RWPE1 (cell line): ENCODE measurements at regions of chr11 and their contacts with region 1.

Region 1: GRCh38 chr11:11621573-11622319 is at the start of gene GALNT18:
- DNase-seq: peak; percentile 98
- H3K27ac ChIP-seq: peak within 1 kb of the TSS; percentile 75
- CTCF ChIP-seq: peak; percentile 44

Region 2: DNA sequence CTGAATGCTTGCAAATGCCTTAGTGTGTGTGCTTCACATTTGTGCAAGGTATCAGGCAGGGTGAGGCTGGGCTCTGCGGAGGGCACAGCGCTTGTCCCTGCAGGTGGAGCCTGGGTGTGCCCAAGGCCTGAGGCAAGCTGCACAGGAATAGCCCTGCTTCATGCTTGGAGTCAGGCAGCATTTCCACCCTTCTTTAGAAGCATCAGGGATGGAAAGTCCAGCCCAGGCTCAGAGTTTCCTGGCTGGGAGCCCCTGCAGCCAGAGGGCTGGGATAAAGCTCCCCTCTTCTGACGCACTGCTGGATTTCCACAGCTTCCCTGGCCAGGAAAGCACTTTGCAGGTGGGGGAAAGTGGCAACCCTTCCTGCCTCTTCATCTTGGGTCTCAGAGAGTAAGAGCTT is 63.4 kb before region 1 on chr11:
- CTCF ChIA-PET with region 1: interaction called, 10 read pairs
- POLR2A ChIA-PET with region 1: no interaction called
- DNase-seq: peak; percentile 51
- H3K27ac ChIP-seq: peak overlapping the region; percentile 77
- CTCF ChIP-seq: no peak